ENCODE measurements at regions of chr9 and their contacts with region 1.

Region 1: GRCh38 chr9:87581513-87581912 is 83.8 kb downstream of the DAPK1 start:
- DNase-seq: no peak
- H3K4me3 ChIP-seq: no peak overlapping the region
- H3K27ac ChIP-seq: no peak overlapping the region
- H3K4me1 ChIP-seq: peaks cover 3% of the 10 kb centered on the region
- CTCF ChIP-seq: no peak

Region 2: GRCh38 chr9:87569518-87569917 is 12.0 kb before region 1 on chr9:
- CTCF ChIA-PET with region 1: interaction called, 3 read pairs
- POLR2A ChIA-PET with region 1: interaction called, 11 read pairs
- intact Hi-C with region 1: no loop called
- DNase-seq: peak; percentile 26
- H3K4me3 ChIP-seq: no peak overlapping the region
- H3K27ac ChIP-seq: no peak overlapping the region
- H3K4me1 ChIP-seq: peaks cover 24% of the 10 kb centered on the region
- CTCF ChIP-seq: no peak

Region 3: GRCh38 chr9:87713278-87713987 is 131.9 kb after region 1 on chr9:
- CTCF ChIA-PET with region 1: no interaction called
- POLR2A ChIA-PET with region 1: no interaction called
- intact Hi-C with region 1: no loop called
- DNase-seq: no peak
- H3K4me3 ChIP-seq: no peak overlapping the region
- H3K27ac ChIP-seq: no peak overlapping the region
- H3K4me1 ChIP-seq: no peaks in the 10 kb centered on the region
- CTCF ChIP-seq: no peak